Panc1 (cell line): ENCODE measurements at regions of chr4 and their contacts with region 1.

Region 1: DNA sequence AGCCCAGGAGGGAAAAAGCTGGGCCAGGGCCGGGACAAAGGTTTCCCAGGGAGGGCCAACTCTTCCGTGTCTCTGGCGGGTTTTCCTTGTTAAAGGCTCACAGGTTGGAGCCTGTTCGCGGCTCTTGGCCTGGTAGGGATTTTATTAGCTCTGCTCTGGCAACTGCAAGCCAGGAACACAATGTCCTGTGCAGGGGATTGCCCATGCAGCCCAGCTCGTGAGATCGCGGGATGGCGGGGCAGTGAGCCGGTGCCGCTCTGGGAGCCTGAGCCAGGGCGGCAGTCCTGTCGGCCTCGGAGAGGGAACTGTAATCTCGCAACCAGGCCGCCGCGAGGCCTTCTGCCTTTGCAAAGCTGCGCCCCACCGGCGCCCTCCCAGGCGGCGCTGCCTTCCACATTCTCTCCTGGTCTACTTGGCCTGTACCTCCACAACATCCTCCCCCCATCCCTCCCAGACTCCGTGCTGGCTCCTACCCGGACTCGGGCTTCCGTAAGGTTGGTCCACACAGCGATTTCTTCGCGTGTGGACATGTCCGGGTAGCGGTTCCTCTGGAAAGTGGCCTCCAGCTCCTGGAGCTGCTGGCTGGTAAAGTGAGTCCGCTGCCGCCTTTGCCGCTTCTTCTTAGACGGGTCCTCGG is 2.1 kb downstream of the PITX2 start:
- DNase-seq: no peak
- ATAC-seq: no peak
- H3K4me3 ChIP-seq: no peak overlapping the region
- H3K27ac ChIP-seq: no peak overlapping the region
- H3K4me1 ChIP-seq: no peaks in the 10 kb centered on the region
- H3K27me3 ChIP-seq: no peaks in the 10 kb centered on the region
- CTCF ChIP-seq: no peak

Region 2: GRCh38 chr4:110059556-110060191 is 561.1 kb before region 1 on chr4:
- CTCF ChIA-PET with region 1: interaction called, 10 read pairs
- POLR2A ChIA-PET with region 1: no interaction called
- in situ Hi-C with region 1: no loop called
- intact Hi-C with region 1: no loop called
- DNase-seq: no peak
- ATAC-seq: no peak
- H3K4me3 ChIP-seq: no peak overlapping the region
- H3K27ac ChIP-seq: no peak overlapping the region
- H3K4me1 ChIP-seq: no peaks in the 10 kb centered on the region
- H3K27me3 ChIP-seq: no peaks in the 10 kb centered on the region
- CTCF ChIP-seq: no peak

Region 3: GRCh38 chr4:111174331-111174730 is 553.5 kb after region 1 on chr4:
- CTCF ChIA-PET with region 1: no interaction called
- POLR2A ChIA-PET with region 1: no interaction called
- in situ Hi-C with region 1: no loop called
- intact Hi-C with region 1: no loop called
- DNase-seq: no peak
- ATAC-seq: no peak
- H3K4me3 ChIP-seq: no peak overlapping the region
- H3K27ac ChIP-seq: no peak overlapping the region
- H3K4me1 ChIP-seq: no peaks in the 10 kb centered on the region
- H3K27me3 ChIP-seq: no peaks in the 10 kb centered on the region
- CTCF ChIP-seq: no peak